ENCODE measurements at regions of chr3 and their contacts with region 1.

Region 1: DNA sequence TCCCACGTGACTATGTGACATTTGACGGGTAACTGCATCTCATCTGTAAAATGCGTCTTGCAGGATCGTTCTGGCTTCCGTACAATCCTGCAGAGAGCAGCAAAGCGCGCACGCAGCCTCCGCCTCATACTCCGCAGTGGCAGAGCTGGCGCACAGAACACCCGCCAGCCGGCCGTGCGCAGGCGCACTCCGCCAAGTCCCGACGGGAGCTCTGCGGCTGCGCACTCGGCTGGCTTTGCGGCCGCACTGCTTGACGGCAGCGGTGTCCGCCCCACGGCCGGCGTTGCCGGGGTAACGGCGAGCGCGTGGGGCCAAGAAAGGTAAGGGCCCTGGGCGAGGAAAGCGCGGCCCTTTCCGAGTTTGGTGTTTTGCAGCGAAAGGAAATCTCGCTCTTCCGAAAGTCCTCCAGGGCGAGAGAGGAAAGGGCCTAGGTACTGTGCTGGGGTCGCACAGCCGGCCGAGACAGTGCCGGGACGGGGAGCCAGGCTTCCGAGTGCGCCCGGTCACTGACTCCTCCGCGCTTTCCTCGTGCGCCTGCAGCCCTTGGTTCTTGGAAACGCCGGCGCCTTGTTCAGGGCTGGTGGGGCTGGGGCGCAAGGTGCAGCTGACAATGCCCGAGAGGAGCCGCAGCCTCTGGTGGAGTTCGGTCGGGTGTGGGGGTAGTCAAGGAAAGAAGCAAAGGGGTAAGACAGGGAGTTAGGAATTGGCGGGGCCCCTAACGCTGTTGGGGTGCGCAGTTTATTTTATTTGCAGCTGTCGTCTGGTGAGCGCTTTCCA is at the start of gene TSEN2:
- DNase-seq: peak; percentile 93 to 95
- H3K4me3 ChIP-seq: peak within 1 kb of the TSS; percentile 52 to 76 (median 68)
- H3K27ac ChIP-seq: peak within 1 kb of the TSS; percentile 37 to 69 (median 59)
- H3K4me1 ChIP-seq: peaks cover 13 to 16% of the 10 kb centered on the region in 2 donors
- H3K27me3 ChIP-seq: no peaks in the 10 kb centered on the region
- CTCF ChIP-seq: peak in 4 of 6 experiments; percentile 24 to 53 (median 34)
- POLR2A ChIP-seq: peak; percentile 56 to 94
- total RNA-seq, gene TSEN2: 14.9 to 25.8 (median 21.4) TPM

Region 2: DNA sequence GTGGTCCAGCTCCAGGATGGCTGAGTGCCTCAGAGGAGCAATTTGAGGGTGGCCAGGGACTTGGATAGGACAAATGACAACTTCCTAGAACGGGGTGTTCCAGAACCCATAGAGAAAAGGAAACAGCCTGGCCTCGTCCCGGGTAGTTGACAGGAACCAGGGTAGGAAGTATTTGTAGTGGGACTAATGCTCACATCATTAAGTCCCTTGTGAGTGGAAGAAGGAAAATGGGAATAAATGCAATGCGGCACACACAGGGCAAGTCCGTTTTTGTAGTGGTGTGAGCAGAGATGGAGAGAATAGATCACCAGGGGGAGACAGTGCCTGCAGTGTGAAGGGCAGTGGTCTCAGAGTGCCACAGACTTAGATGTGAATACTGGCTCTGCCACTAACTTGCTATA is 345.3 kb before region 1 on chr3:
- intact Hi-C with region 1: loop called (anchors 2 kb)
- DNase-seq: peak; percentile 9 to 21
- H3K4me3 ChIP-seq: no peak overlapping the region
- H3K27ac ChIP-seq: peak overlapping the region in 1 of 3 donors; percentile 3
- H3K4me1 ChIP-seq: peaks cover 0 to 3% of the 10 kb centered on the region in 2 donors
- H3K27me3 ChIP-seq: no peaks in the 10 kb centered on the region
- CTCF ChIP-seq: peak in 4 of 6 experiments; percentile 19 to 50 (median 44)
- POLR2A ChIP-seq: no peak

Region 3: DNA sequence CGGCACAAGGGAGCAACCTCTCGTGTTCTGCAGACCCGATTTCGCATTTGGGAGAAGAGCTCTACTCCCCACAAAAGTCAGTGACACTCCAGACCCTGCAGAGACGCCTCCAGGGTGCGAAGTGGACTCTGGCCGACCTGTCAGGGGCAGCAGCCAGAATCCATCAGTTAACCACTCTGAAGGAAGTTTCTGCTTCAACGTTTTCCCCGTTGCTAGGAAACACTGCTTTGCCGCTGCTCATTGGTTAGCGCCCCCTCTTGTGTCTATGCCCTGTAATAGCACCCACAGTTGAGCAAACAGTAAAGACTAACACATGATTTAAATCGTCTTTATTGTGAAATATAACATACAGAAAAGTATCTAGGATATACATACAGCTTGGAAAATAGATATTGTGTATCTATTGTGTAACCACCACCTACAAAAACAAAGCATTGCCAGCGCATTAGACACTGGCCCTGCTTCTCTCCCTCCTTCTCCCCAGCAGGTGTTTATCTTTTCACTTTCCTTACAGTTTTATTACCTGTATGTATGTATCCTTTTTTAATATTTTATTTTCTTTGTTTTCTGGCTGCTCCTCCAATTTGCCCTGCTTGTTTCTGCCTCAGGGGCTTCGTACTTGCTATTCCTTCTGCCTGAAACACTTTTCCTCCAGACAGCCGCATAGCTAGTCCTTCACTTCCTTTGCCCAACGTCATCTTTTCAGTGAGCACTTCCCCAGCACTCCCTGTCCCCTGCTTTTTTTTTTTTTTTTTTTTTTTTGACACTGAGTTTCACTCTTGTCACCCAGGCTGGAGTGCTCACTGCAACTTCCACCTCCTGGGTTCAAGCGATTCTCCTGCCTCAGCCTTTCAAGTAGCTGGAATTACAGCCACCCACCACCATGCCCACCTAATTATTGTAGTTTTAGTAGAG is 235.9 kb after region 1 on chr3:
- intact Hi-C with region 1: loop called (anchors 10 kb)
- DNase-seq: peak; percentile 69 to 71
- H3K4me3 ChIP-seq: no peak overlapping the region
- H3K27ac ChIP-seq: no peak overlapping the region
- H3K4me1 ChIP-seq: no peaks in the 10 kb centered on the region
- H3K27me3 ChIP-seq: no peaks in the 10 kb centered on the region
- CTCF ChIP-seq: peak; percentile 68 to 93 (median 90)
- POLR2A ChIP-seq: no peak

Measured in thyroid gland (tissue), 4 donors.